Naive thymus-derived CD8-positive, alpha-beta T cell (primary cell): ENCODE measurements at regions of chr19 and their contacts with region 1.

Region 1: DNA sequence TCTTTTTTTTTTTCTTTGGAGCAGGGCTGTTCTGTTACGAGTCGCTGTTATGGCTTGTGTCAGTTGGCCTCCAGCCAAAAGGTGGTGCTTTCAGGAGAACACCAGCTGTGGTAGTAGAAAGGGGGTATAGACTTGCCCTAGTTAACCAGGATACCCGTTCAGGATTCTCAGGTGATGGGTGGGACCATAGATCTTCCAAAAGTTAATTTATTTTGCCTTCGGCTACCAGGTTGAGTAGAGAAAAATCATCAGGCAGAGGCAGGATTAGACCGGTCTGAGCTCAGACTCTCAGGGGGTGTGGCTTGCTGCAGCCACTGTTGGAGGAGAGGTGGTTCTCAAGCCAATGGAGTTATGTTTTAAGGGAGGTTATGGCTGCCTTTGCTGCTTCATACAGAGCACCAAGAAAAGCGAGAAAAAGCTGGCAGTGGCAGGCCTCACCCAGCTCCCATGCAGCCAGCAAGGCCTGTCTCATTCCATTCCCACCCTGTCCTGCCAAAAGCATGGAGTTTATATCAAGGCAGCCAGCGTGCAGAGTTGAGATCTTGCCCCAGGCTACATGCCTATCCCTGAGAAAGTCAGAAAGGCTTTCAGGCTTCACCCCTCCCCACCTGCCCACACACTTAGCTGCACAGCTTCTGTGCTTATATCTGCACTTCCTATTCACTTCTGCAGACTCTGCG is 12.2 kb upstream of the ZNF675 start:
- DNase-seq: peak in 6 of 10 donors; percentile 10 to 42 (median 30)
- ATAC-seq: peak; percentile 88 to 94
- H3K4me3 Mint-ChIP-seq: peak overlapping the region; percentile 30 to 80 (median 65)
- H3K27ac Mint-ChIP-seq: peak overlapping the region; percentile 64 to 94 (median 84)
- H3K4me1 Mint-ChIP-seq: peaks cover 0 to 13% (median 4%) of the 10 kb centered on the region in 4 donors
- H3K27me3 Mint-ChIP-seq: peaks cover 0 to 7% (median 0%) of the 10 kb centered on the region in 5 donors

Region 2: GRCh38 chr19:23686621-23687423 is 12.4 kb before region 1 on chr19 and contains the start of gene ZNF675:
- POLR2A ChIA-PET with region 1: interaction called, 17 read pairs
- DNase-seq: peak; percentile 72 to 95 (median 88)
- ATAC-seq: peak; percentile 92 to 94
- H3K4me3 Mint-ChIP-seq: peak within 1 kb of the TSS; percentile 97 to 100 (median 99)
- H3K27ac Mint-ChIP-seq: peak within 1 kb of the TSS; percentile 97 to 100 (median 99)
- H3K4me1 Mint-ChIP-seq: peaks cover 15 to 62% (median 45%) of the 10 kb centered on the region in 4 donors
- H3K27me3 Mint-ChIP-seq: no peaks in the 10 kb centered on the region
- polyA plus RNA-seq, gene ZNF675: 16.3 to 18.5 (median 18.1) TPM